ENCODE measurements at regions of chr13 and their contacts with region 1.

Region 1: GRCh38 chr13:23707674-23708073 is 137.5 kb downstream of the TNFRSF19 start:
- DNase-seq: no peak

Region 2: DNA sequence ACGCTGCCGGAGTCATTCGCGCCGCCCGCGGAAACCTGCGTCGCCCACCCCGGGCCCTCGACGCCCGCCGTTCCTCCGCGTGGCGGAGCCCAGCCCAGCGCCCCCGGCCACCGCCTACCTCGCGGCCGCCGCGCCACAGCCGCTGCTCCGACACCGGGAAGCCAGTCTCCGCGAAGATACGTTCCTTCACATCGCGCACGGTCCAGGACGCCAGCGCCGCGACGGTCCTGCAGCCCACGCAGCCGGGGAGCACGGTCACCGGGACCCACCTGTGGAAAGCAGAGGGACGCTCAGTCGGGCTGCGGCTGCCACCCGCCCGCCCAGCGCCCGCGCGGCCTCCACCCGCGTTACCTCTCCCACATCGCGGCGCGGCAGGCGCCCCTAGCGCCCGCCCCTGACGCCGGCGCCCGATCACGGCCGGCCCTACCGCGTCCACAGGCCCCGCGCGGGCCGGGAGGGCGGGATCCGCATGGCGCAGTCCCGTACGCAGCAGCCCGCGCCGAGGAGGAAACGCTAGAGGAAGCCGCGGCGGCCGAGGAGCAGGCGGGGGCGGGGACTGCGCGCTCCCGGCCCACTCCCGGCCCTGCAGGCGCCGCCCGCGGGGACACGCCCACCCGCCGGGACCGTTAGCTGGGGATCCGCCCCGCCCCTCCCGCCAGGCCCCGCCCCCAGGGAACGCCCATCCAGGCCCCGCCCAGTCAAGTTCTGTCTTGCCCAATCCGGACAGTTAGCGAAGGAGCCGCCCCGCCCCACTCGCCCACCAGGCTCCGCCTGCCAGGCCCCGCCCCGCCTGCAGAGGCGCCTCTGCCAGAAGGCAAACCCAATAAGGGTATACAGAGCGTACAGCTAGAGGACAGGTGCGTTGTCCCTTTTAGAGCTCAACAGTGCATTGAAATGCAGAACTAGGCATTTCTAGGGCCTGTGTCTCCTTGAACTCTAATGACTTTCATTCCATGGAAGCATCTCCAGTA is 332.4 kb before region 1 on chr13:
- intact Hi-C with region 1: loop called (anchors 10 kb)
- DNase-seq: peak; percentile 99

Region 3: GRCh38 chr13:23871616-23872220 is 164.0 kb after region 1 on chr13:
- intact Hi-C with region 1: loop called (anchors 5 kb)
- DNase-seq: no peak